Calu3 (cell line): ENCODE measurements at regions of chr1 and their contacts with region 1.

Region 1: GRCh38 chr1:199954699-199955098 is 72.8 kb upstream of the NR5A2 start:
- DNase-seq: peak; percentile 64
- H3K4me3 Mint-ChIP-seq: no peak overlapping the region
- H3K27ac Mint-ChIP-seq: peak overlapping the region; percentile 22
- H3K4me1 Mint-ChIP-seq: peaks cover 23% of the 10 kb centered on the region
- H3K27me3 Mint-ChIP-seq: no peaks in the 10 kb centered on the region
- CTCF ChIP-seq: peak; percentile 69

Region 2: GRCh38 chr1:199759268-199759724 is 195.4 kb before region 1 on chr1:
- CTCF ChIA-PET with region 1: no interaction called
- intact Hi-C with region 1: loop called (anchors 1 kb)
- DNase-seq: peak; percentile 73
- H3K4me3 Mint-ChIP-seq: peak overlapping the region; percentile 39
- H3K27ac Mint-ChIP-seq: peak overlapping the region; percentile 94
- H3K4me1 Mint-ChIP-seq: peaks cover 35% of the 10 kb centered on the region
- H3K27me3 Mint-ChIP-seq: no peaks in the 10 kb centered on the region
- CTCF ChIP-seq: no peak

Region 3: DNA sequence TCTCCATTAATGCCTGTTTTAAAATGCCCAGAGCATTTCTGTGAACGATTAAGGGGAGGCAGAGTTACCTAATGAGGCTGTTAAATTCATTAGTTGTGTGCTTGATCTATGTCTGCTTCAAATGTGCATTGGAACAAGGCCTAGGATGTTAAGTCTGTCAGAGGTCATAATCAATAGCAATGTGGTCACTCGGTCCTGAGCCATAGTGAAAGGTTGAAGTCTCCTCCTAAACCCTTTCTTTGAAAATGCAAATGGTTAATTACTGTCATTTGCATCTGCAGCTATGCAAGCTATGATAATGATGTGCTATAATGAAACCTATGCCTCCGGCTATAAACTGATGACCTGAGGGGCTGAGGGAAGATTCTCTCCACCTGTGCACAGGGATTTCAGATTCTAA is 41.4 kb before region 1 on chr1:
- CTCF ChIA-PET with region 1: no interaction called
- intact Hi-C with region 1: no loop called
- DNase-seq: no peak
- H3K4me3 Mint-ChIP-seq: no peak overlapping the region
- H3K27ac Mint-ChIP-seq: no peak overlapping the region
- H3K4me1 Mint-ChIP-seq: peaks cover 13% of the 10 kb centered on the region
- H3K27me3 Mint-ChIP-seq: no peaks in the 10 kb centered on the region
- CTCF ChIP-seq: no peak

Region 4: DNA sequence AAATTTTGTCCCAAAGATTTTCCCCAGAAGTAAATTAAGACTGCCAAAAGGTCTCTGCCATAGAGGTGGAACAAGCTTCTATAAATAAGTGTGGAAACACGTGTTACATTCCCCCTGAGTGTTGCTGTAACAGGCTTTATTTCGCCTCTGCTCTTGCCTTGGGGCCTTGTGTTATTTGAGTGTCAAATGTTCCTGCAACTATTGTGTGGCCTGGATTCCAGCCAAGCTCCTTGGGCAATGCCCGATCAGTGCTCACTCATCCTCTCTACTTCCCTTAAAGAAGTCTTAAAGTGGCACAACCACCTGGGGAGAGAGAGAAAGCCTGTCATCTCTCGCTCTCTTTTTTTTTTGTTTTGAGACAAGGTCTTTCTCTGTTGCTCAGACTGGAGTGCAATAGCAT is 229.5 kb after region 1 on chr1:
- CTCF ChIA-PET with region 1: no interaction called
- intact Hi-C with region 1: loop called (anchors 10 kb)
- DNase-seq: peak; percentile 86
- H3K4me3 Mint-ChIP-seq: no peak overlapping the region
- H3K27ac Mint-ChIP-seq: peak overlapping the region; percentile 20
- H3K4me1 Mint-ChIP-seq: peaks cover 51% of the 10 kb centered on the region
- H3K27me3 Mint-ChIP-seq: no peaks in the 10 kb centered on the region
- CTCF ChIP-seq: no peak